PC-9 (cell line): ENCODE measurements at regions of chr2 and their contacts with region 1.

Region 1: DNA sequence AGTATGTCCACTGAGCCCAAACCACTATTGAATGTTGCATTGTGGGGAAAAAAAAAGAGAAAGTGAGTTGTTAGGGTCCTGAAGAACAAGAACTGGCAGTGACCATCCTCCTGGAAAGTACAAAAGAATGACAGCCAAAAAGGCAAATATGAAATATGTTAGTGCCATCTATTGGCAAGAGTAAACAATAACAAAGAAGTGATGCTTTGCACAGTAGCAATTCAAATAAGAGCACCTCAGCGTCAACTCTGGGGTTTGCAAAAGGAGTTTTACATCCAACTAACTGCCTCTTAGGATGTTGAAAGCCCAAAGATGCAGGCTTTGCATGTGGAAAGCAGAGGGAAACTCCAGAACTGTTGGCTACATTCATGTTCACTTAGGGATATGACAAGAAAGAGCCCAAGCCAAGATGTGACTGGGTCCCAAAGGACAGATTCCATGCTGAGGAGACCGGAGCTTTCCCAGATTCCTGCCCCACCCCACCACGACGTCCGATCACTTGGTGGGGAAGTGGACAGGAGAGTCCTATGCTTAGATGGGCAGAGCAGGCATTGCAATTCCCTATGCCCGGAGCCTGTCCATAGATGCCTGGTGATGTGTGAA is 15.6 kb downstream of the TRABD2A start:
- DNase-seq: peak in 1 of 2 experiments; percentile 36
- H3K4me3 ChIP-seq: no peak overlapping the region
- H3K27ac ChIP-seq: no peak overlapping the region
- H3K4me1 ChIP-seq: no peaks in the 10 kb centered on the region
- H3K27me3 ChIP-seq: peaks cover 35% of the 10 kb centered on the region; the same call in 1 of the 2 replicates
- CTCF ChIP-seq: peak; percentile 62; the same call in 1 of the 2 replicates

Region 2: GRCh38 chr2:84302513-84303412 is 562.5 kb before region 1 on chr2:
- CTCF ChIA-PET with region 1: no interaction called
- POLR2A ChIA-PET with region 1: no interaction called
- intact Hi-C with region 1: no loop called
- DNase-seq: peak in 1 of 2 experiments; percentile 24
- H3K4me3 ChIP-seq: no peak overlapping the region
- H3K27ac ChIP-seq: no peak overlapping the region
- H3K4me1 ChIP-seq: no peaks in the 10 kb centered on the region
- H3K27me3 ChIP-seq: peaks cover 29% of the 10 kb centered on the region
- CTCF ChIP-seq: peak; percentile 76

Region 3: GRCh38 chr2:84631047-84631446 is 234.2 kb before region 1 on chr2:
- CTCF ChIA-PET with region 1: no interaction called
- POLR2A ChIA-PET with region 1: no interaction called
- intact Hi-C with region 1: loop called (anchors 10 kb)
- DNase-seq: peak in 1 of 2 experiments; percentile 41
- H3K4me3 ChIP-seq: no peak overlapping the region
- H3K27ac ChIP-seq: no peak overlapping the region
- H3K4me1 ChIP-seq: no peaks in the 10 kb centered on the region
- H3K27me3 ChIP-seq: 0 out of 2 replicates have a peak, but pooled peaks cover 12% of the 10 kb centered on the region
- CTCF ChIP-seq: peak; percentile 71

Region 4: DNA sequence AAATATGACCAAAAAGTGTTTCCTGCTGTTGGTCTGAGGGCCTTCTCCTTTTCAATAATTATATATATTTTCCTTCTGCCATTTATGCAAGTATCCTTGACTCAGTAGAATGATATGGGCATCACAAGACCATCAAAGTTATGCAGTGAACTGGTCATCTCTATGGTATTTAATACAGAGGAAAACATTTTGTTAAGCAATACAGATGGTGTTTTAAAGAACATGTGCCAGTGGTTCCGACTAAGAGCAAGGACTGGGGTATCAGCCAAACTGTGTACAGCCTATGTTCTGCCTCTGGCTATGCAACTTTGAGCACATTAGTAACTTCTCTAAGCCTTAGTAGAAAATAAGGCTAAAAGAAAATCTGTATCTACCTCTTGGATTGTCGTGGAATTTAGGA is 163.4 kb before region 1 on chr2:
- CTCF ChIA-PET with region 1: no interaction called
- POLR2A ChIA-PET with region 1: no interaction called
- intact Hi-C with region 1: no loop called
- DNase-seq: no peak
- H3K4me3 ChIP-seq: no peak overlapping the region
- H3K27ac ChIP-seq: no peak overlapping the region
- H3K4me1 ChIP-seq: no peaks in the 10 kb centered on the region
- H3K27me3 ChIP-seq: peaks cover 38% of the 10 kb centered on the region
- CTCF ChIP-seq: no peak

Region 5: DNA sequence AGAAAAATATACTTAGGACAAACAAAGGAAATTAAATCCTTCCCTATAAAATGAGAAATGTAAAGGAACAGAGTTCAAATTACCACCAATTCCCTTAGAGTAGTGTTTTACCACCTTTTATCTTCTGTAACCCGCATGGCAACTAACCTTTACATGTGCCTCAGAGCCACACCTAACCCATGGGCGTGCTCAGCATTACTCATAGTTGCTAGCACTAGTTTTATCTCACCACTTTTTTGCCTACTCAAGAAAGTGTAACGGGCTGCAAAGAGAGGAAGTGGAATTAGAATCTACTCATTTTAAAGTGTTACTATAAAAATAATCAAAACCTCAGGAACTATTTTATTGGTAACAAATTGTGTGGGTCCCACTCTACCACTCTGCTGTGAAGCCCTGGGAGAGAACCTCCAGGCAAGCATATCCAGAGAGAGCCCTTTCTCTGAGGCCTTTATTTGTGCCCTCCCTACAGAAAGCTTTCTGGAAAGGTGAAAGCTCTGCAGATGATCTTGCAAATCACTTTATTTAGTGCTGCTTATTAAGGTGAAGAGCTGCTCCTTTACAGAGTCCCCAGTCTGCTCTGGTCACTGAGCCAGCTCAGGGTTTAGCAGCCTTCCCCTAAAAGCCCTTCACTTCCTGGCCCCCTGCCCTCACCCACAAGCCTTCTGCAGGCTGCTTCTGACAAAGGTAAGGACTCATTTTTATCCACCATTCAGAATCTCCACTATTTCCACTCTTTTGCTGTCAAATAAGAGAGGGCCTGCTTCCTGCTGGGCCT is 83.2 kb before region 1 on chr2:
- CTCF ChIA-PET with region 1: no interaction called
- POLR2A ChIA-PET with region 1: no interaction called
- intact Hi-C with region 1: no loop called
- DNase-seq: no peak
- H3K4me3 ChIP-seq: no peak overlapping the region
- H3K27ac ChIP-seq: no peak overlapping the region
- H3K4me1 ChIP-seq: no peaks in the 10 kb centered on the region
- H3K27me3 ChIP-seq: peaks cover 21% of the 10 kb centered on the region; the same call in 1 of the 2 replicates
- CTCF ChIP-seq: no peak

Region 6: DNA sequence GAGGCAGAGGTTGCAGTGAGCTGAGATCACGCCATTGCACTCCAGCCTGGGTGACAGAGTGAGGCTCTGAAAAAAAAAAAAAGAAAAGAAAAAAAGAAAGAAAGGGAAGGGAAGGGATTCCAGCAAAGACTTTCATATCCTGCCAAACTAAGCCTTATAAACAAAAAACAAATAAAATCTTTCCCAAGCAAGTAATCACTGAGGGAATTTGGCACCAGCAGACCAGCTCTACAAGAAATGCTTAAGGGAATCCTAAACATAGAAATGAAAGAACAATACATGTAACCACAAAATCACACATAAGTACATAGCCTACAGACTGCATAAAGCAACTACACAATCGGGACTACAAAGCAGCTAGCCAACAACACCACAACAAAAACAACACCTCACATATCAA is 63.5 kb before region 1 on chr2:
- CTCF ChIA-PET with region 1: no interaction called
- POLR2A ChIA-PET with region 1: interaction called, 14 read pairs
- intact Hi-C with region 1: no loop called
- DNase-seq: no peak
- H3K4me3 ChIP-seq: no peak overlapping the region
- H3K27ac ChIP-seq: no peak overlapping the region
- H3K4me1 ChIP-seq: no peaks in the 10 kb centered on the region
- H3K27me3 ChIP-seq: peaks cover 5% of the 10 kb centered on the region; the same call in 1 of the 2 replicates
- CTCF ChIP-seq: no peak

Region 7: GRCh38 chr2:84846041-84846663 is 19.1 kb before region 1 on chr2:
- CTCF ChIA-PET with region 1: no interaction called
- POLR2A ChIA-PET with region 1: no interaction called
- intact Hi-C with region 1: no loop called
- DNase-seq: no peak
- H3K4me3 ChIP-seq: no peak overlapping the region
- H3K27ac ChIP-seq: no peak overlapping the region
- H3K4me1 ChIP-seq: no peaks in the 10 kb centered on the region
- H3K27me3 ChIP-seq: peaks cover 29% of the 10 kb centered on the region; the same call in 1 of the 2 replicates
- CTCF ChIP-seq: no peak